AG04449 (cell line): ENCODE measurements at regions of chr17 and their contacts with region 1.

Region 1: GRCh38 chr17:48259694-48260291 is 152.2 kb downstream of the SNX11 start:
- DNase-seq: no peak
- H3K4me3 ChIP-seq: no peak overlapping the region
- CTCF ChIP-seq: peak; percentile 43

Region 2: DNA sequence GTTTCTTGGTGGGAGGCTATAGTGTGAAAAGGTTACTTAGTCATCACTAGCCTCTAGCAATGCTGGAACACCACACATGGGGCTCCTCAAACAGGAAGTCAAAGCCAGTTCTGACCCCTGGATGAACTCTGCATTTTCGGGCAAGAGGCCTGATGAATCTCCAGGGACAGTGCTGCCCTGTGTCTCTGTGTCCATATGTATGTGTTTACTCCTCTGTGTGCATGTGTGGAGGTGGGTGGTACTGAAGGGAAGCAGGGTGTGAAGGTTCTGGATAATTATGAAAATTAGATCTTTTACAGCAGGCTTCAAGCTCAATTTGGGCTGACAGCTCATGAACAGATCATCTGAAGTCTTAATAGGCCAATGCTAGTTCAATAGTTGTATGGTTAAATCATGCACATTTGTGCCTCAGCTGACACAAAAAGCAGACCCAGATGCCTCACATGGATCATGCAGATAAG is 18.6 kb before region 1 on chr17:
- CTCF ChIA-PET with region 1: interaction called, 31 read pairs
- POLR2A ChIA-PET with region 1: no interaction called
- DNase-seq: no peak
- H3K4me3 ChIP-seq: no peak overlapping the region
- CTCF ChIP-seq: no peak

Region 3: DNA sequence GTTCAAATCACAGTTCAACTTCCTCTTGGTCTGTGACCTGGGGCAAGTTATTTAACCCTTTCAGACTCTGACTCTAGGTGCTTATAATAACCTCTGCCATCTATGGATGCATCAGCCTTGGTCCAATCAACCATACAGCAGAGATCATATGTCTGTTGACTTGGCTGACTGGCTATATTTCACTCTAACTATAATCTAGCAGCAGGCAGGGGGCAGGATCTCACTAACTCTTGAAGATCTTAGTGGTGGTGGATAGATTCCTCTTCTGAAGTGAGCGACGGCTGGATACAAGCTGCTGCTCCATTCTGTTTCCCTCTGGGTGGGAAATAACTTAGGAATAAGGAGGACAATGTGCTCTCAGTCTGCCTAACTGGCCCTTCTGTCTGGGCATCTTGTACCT is 23.6 kb after region 1 on chr17:
- CTCF ChIA-PET with region 1: interaction called, 99 read pairs
- POLR2A ChIA-PET with region 1: no interaction called
- DNase-seq: no peak
- H3K4me3 ChIP-seq: no peak overlapping the region
- CTCF ChIP-seq: no peak

Region 4: DNA sequence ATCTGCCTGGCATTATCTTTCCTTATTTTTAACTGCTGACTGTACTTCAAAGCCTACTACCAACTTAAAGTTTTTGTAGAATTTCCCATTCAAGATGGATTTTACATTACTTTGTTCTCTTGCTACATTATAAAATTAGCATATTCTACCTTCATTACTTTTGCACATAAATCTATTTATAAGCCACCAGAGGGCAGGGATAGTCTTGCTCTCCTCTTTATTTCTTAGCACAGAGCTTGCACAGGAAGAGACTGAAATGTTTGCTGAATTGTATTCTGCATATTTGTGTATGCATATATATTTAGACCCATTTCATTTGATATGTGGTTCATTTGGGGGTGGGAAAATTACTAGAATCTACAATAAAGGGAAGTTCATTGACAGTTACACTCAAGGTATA is 62.3 kb after region 1 on chr17:
- CTCF ChIA-PET with region 1: no interaction called
- POLR2A ChIA-PET with region 1: no interaction called
- DNase-seq: no peak
- H3K4me3 ChIP-seq: no peak overlapping the region
- CTCF ChIP-seq: no peak

Region 5: GRCh38 chr17:48618256-48618897 is 358.6 kb after region 1 on chr17:
- CTCF ChIA-PET with region 1: interaction called, 28 read pairs
- POLR2A ChIA-PET with region 1: no interaction called
- DNase-seq: no peak
- H3K4me3 ChIP-seq: peak overlapping the region; percentile 29
- CTCF ChIP-seq: peak; percentile 88